Right cardiac atrium (tissue), 5 donors: ENCODE measurements at regions of chr9 and their contacts with region 1.

Region 1: DNA sequence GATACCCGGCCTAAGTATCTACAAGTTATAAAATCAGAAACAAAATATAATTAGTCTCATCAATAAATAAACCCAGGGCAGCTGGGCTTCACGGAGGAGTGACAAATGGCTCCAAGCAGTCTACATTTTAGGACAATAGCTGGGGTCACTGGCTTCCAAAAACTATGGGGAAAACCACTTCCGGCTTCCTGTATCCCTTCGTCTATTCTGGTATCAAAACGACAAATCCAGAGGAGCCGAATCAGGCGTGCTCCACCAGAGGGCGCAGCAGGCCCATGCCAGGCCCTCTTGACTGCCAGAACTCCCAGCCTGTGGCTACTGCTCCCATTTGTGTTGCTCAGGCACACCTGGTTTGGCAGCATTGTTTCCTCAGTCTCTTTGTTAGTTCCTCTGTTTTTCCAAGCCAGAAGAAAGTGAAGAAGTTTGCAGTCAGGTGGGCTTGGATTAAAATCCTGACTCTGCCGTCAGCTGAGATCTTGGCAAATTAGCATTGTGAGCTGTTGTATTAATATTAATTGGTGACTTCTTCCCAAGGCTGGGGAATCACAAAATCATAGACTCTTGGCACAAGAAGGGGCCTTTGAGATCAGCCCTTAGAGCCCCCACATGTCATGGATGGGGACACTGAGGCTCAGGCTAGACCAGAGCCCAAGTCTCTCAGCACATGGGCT is 11.6 kb upstream of the RAB14 start:
- DNase-seq: peak; percentile 89 to 96 (median 95)
- ATAC-seq: peak; percentile 92 to 95
- H3K4me3 ChIP-seq: no peak overlapping the region
- H3K27ac ChIP-seq: peak overlapping the region; percentile 48
- H3K4me1 ChIP-seq: no peaks in the 10 kb centered on the region
- H3K27me3 ChIP-seq: no peaks in the 10 kb centered on the region

Region 2: DNA sequence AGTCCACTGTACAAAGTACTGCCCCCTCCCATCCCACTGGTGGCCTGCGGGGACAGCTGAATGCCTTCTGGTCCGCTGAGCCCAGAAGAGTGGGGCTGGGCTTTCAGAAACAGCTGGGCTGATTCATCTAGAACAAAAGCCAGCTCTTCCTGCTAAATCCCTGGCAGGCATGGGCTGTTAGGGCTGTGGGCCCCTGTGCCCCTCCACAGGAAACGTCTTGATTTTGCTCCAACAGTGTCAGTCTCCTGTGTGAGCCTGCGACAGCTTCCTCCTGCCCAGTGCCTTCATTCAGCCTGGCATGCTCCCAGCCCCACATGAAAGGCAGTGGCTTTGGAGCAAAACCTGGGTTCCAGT is 47.8 kb after region 1 on chr9:
- intact Hi-C with region 1: loop called in 2 of 4 experiments (anchors 5 to 10 kb)
- DNase-seq: peak; percentile 47 to 73 (median 67)
- ATAC-seq: peak; percentile 73 to 78
- H3K4me3 ChIP-seq: no peak overlapping the region
- H3K27ac ChIP-seq: no peak overlapping the region
- H3K4me1 ChIP-seq: peaks cover 2% of the 10 kb centered on the region
- H3K27me3 ChIP-seq: no peaks in the 10 kb centered on the region

Region 3: DNA sequence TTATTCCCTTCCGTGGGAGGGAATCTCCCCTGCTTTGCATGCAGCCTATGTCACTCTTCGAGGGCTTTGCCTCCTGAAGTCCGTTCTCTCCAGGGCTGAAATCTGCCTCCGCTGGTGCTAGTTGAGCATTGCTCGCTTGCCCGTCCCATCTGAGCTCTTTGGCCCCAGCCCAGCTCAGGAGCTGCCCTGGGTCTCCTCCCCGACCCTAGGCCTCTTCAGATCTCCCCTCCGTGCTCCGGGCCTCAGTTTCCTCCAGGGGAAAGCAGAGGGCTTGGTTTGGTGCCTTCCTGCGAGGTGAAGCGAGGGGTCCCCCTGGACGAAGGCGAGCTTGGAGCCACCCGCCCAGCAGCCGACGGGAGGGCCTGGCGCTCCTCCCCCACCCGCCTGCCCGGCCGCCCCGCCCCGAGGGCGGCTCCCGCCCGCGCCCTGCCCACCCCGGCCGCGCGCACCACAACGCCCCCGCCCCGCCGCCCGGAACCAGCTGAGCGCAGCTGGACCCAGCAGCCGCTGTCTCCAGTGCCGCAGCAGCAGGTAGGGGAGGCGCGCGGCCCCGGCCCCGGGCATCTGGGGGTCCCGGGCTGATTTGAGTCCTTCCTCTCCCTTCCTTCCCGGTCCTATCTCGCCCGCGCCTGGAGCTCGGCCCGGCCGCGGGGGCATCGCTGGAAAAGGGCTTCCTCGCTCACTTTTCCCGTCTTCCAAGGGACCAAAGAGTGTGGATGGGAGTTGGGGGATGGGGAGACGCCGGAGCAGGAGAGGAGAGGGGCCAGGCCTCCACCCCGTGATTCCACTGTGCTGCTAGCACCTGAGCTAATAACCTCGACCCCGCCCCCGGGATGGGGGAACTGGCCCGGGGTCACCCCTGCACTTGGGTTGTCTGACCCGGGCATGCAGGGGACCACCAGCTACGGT is 54.7 kb after region 1 on chr9 and contains the start of gene GSN:
- intact Hi-C with region 1: loop called in 2 of 4 experiments (anchors 5 to 10 kb)
- DNase-seq: peak; percentile 84 to 95 (median 94)
- ATAC-seq: peak; percentile 92
- H3K4me3 ChIP-seq: peak within 1 kb of the TSS; percentile 86
- H3K27ac ChIP-seq: peak within 1 kb of the TSS; percentile 73
- H3K4me1 ChIP-seq: peaks cover 20% of the 10 kb centered on the region
- H3K27me3 ChIP-seq: no peaks in the 10 kb centered on the region
- total RNA-seq, gene GSN: 949 to 1,838 (median 1,489) TPM

Region 4: GRCh38 chr9:121299467-121300234 is 86.4 kb after region 1 on chr9:
- intact Hi-C with region 1: loop called in 1 of 4 experiments (anchors 10 kb)
- DNase-seq: peak; percentile 92 to 97 (median 96)
- ATAC-seq: peak; percentile 83 to 86
- H3K4me3 ChIP-seq: peak overlapping the region; percentile 94
- H3K27ac ChIP-seq: peak overlapping the region; percentile 94
- H3K4me1 ChIP-seq: peaks cover 32% of the 10 kb centered on the region
- H3K27me3 ChIP-seq: no peaks in the 10 kb centered on the region

Region 5: GRCh38 chr9:121321016-121321503 is 107.8 kb after region 1 on chr9:
- intact Hi-C with region 1: loop called in 2 of 4 experiments (anchors 10 kb)
- DNase-seq: peak in 2 of 3 donors; percentile 51 to 59
- ATAC-seq: peak in 1 of 2 donors; percentile 2
- H3K4me3 ChIP-seq: no peak overlapping the region
- H3K27ac ChIP-seq: peak overlapping the region; percentile 47
- H3K4me1 ChIP-seq: peaks cover 12% of the 10 kb centered on the region
- H3K27me3 ChIP-seq: no peaks in the 10 kb centered on the region

Region 6: GRCh38 chr9:121399883-121400607 is 186.8 kb after region 1 on chr9:
- intact Hi-C with region 1: loop called (anchors 2 to 10 kb)
- DNase-seq: no peak
- ATAC-seq: peak; percentile 33 to 54
- H3K4me3 ChIP-seq: no peak overlapping the region
- H3K27ac ChIP-seq: no peak overlapping the region
- H3K4me1 ChIP-seq: no peaks in the 10 kb centered on the region
- H3K27me3 ChIP-seq: no peaks in the 10 kb centered on the region